ENCODE measurements at regions of chr13 and their contacts with region 1.

Region 1: GRCh38 chr13:39095500-39095899 is 57.2 kb downstream of the NHLRC3 start:
- DNase-seq: no peak
- ATAC-seq: no peak
- H3K4me3 ChIP-seq: no peak overlapping the region
- H3K4me3 Mint-ChIP-seq: no peak overlapping the region
- H3K27ac ChIP-seq: no peak overlapping the region
- H3K27ac Mint-ChIP-seq: no peak overlapping the region
- H3K4me1 ChIP-seq: no peaks in the 10 kb centered on the region
- H3K4me1 Mint-ChIP-seq: peaks cover 0 to 20% (median 7%) of the 10 kb centered on the region in 3 donors
- H3K27me3 ChIP-seq: no peaks in the 10 kb centered on the region
- H3K27me3 Mint-ChIP-seq: no peaks in the 10 kb centered on the region

Region 2: GRCh38 chr13:39058040-39058439 is 37.5 kb before region 1 on chr13:
- CTCF ChIA-PET with region 1: interaction called in 1 of 2 experiments, 11 read pairs
- POLR2A ChIA-PET with region 1: no interaction called
- DNase-seq: no peak
- ATAC-seq: no peak
- H3K4me3 ChIP-seq: no peak overlapping the region
- H3K4me3 Mint-ChIP-seq: no peak overlapping the region
- H3K27ac ChIP-seq: no peak overlapping the region
- H3K27ac Mint-ChIP-seq: no peak overlapping the region
- H3K4me1 ChIP-seq: no peaks in the 10 kb centered on the region
- H3K4me1 Mint-ChIP-seq: peaks cover 32 to 42% (median 35%) of the 10 kb centered on the region in 3 donors
- H3K27me3 ChIP-seq: no peaks in the 10 kb centered on the region
- H3K27me3 Mint-ChIP-seq: no peaks in the 10 kb centered on the region